Activated CD4-positive, alpha-beta memory T cell treated with anti-CD3 and anti-CD28 coated beads, Interleukin-2, amount 10 ng/mL, durations not matched to agents 7 days and 5 days (primary cell): ENCODE measurements at regions of chr21 and their contacts with region 1.

Region 1: GRCh38 chr21:29024474-29025327 is at the start of gene USP16:
- DNase-seq: peak; percentile 95
- H3K4me3 Mint-ChIP-seq: peak within 1 kb of the TSS; percentile 98
- H3K27ac Mint-ChIP-seq: peak within 1 kb of the TSS; percentile 95
- H3K4me1 Mint-ChIP-seq: peaks cover 57% of the 10 kb centered on the region
- H3K27me3 Mint-ChIP-seq: no peaks in the 10 kb centered on the region
- total RNA-seq, gene USP16: 34.3 to 37.1 TPM

Region 2: DNA sequence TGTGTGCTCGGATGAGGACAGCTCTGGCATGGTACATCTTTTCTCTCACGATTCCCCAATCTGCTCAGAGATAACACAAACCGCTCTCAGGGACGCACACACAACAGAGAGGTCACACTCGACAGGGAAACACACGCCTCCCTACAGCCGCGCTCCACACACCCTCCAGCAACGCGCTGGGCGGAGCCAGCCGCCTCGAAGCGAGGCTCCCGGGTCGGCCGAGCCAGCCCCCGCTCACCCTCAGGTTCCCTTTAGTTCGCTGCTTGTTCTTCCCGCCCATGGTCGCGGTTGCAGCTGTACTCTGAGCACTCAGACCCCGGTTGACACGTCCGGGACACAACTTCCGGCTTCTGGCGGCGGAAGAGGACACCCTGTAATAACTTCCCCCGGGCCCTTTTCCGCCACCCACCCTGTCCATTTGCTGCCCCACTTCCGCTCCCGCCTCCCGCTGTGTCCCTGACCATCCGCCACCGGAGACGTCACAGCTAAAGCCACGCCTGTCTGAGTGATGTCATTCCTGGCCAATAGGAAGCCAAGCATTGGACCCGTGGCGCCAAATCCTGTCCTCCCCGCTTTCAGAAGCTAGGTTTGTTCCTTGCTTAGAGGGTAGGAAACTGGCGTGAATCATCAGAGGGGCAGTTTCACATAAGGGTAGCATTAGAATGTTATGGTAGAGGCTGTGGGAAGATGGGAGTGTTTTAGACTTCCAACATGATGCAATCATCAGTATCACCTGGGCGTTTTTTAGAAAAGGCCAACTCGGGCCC is 32.0 kb before region 1 on chr21 and contains the start of gene LTN1:
- CTCF ChIA-PET with region 1: interaction called, 8 read pairs
- POLR2A ChIA-PET with region 1: interaction called, 74 read pairs
- DNase-seq: peak; percentile 99
- H3K4me3 Mint-ChIP-seq: peak within 1 kb of the TSS; percentile 86
- H3K27ac Mint-ChIP-seq: peak within 1 kb of the TSS; percentile 94
- H3K4me1 Mint-ChIP-seq: peaks cover 44% of the 10 kb centered on the region
- H3K27me3 Mint-ChIP-seq: no peaks in the 10 kb centered on the region
- total RNA-seq, gene LTN1: 25.8 to 26.5 TPM

Region 3: GRCh38 chr21:29002442-29003144 is 22.1 kb before region 1 on chr21:
- CTCF ChIA-PET with region 1: interaction called, 18 read pairs
- POLR2A ChIA-PET with region 1: interaction called, 127 read pairs
- DNase-seq: peak; percentile 96
- H3K4me3 Mint-ChIP-seq: peak overlapping the region; percentile 86
- H3K27ac Mint-ChIP-seq: peak overlapping the region; percentile 93
- H3K4me1 Mint-ChIP-seq: peaks cover 13% of the 10 kb centered on the region
- H3K27me3 Mint-ChIP-seq: no peaks in the 10 kb centered on the region

Region 4: GRCh38 chr21:29073222-29074006 is 48.7 kb after region 1 on chr21 and contains the start of gene CCT8:
- CTCF ChIA-PET with region 1: interaction called, 11 read pairs
- POLR2A ChIA-PET with region 1: interaction called, 56 read pairs
- DNase-seq: peak; percentile 99
- H3K4me3 Mint-ChIP-seq: peak within 1 kb of the TSS; percentile 97
- H3K27ac Mint-ChIP-seq: peak within 1 kb of the TSS; percentile 93
- H3K4me1 Mint-ChIP-seq: peaks cover 59% of the 10 kb centered on the region
- H3K27me3 Mint-ChIP-seq: no peaks in the 10 kb centered on the region
- total RNA-seq, gene CCT8: 214 to 216 TPM

Region 5: DNA sequence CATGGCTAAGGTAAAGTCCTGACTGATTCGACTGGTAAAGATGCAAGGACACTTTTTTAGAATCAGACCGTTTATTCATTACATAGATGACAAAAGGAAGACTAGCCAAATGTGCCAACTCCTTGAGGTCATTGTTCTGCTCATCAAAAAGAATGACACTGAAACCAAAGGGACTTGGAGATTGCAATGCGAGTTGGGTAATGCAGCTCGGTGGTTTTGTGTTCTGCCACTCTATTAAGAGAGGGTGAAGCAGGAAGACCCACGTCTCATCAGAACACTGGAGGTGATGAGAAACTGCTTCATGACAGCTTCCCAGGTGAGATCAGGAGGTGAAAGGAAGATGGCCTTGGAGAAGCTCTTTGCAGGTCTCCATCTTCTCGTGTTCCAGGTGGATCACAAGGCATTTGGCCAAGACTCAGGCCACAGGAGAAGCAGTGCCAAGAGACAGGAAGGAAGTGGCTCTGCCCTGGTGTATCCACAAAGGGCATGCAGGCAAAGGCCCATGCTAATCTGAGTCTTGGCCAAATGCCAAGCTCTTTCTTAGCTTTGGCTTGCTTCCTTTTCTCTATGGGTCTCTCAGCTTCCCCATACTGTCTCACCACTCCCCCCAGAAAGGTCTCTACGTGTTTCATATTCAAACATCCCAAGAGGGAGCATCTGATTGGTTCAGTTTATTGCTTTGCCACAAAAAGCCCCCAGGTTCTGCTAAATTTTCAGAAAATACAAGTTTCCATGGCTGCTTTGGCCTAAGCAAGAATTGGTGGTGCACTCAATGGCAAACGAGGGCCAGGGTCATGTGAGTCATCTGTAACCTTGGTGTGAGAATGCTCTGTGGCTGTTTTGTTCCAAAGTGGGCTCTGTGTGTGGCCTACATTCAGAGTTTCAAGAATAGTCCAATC is 54.4 kb after region 1 on chr21:
- CTCF ChIA-PET with region 1: interaction called, 11 read pairs
- POLR2A ChIA-PET with region 1: interaction called, 56 read pairs
- DNase-seq: peak; percentile 42
- H3K4me3 Mint-ChIP-seq: peak overlapping the region; percentile 21
- H3K27ac Mint-ChIP-seq: peak overlapping the region; percentile 82
- H3K4me1 Mint-ChIP-seq: peaks cover 56% of the 10 kb centered on the region
- H3K27me3 Mint-ChIP-seq: no peaks in the 10 kb centered on the region